ENCODE measurements at regions of chr9 and their contacts with region 1.

Region 1: DNA sequence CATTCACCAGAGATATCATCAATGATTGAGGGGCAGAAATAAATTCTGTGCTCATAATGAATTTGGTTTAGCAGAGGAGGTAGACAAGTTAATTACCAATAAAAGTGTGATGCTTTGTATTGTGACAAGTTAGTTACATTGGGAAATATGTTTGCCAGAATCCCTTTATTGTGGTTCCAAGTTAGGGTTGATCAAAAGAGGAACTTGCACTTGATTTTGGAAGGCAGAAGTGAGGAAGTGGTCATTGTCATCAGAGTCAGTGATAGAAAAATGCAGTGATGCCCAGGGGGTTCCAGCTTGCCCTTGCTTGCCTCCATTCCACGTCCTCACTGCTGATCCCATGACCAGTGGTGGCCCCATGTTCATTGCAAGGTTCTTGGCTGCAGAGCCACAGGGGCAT is 69.7 kb downstream of the SVEP1 start:
- DNase-seq: no peak
- H3K4me3 ChIP-seq: no peak overlapping the region
- CTCF ChIP-seq: no peak

Region 2: DNA sequence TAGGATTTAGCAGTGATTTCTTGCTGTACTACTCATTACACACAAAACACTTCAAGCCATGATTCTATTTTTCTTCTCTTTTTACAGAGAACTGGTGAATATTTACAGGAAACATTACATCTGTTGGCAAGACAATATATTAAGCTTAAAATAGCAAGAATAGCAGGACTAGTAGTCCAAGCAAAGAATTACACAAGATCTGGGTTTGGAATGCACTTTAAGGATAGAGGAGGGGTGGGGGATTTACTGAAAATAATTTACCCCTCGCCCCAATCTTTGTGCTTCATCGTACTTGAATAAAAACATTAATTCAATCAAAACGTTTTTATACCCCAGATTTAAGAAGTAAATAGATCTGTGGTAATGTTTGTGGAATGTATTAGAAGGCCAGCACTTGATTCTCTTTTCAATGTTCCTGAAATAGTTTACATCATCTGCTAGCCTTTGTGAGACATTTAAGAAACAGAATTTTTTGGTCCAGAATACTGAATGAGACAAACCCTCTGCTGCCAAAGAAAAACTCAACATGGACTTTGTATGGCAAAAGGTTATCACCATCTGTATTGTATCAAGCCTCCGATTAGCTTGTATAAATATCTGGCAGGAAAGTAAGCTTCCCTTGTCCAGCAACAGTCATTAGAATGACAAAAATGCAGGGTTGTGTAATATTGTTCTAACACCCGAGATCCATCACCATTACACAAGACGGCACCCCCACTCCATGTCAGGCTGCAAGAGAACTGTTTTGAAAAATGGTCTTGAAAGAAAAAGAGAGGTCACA is 45.9 kb after region 1 on chr9:
- in situ Hi-C with region 1: loop called (anchors 5 kb)
- DNase-seq: peak; percentile 45
- H3K4me3 ChIP-seq: no peak overlapping the region
- CTCF ChIP-seq: no peak

Measured in astrocyte of the cerebellum (primary cell).